Activated T-helper 1 cell treated with anti-CD3 and anti-CD28 coated beads, Interleukin-12 subunit alpha, Interleukin-12 subunit beta, Interleukin-2, Interleukin-4 antibody, amounts not matched to agents 30 ng/mL and 10 ng/mL and 1 ng/mL, durations not matched to agents 14 hours and 24 hours and 36 hours (primary cell): ENCODE measurements at regions of chr14 and their contacts with region 1.

Region 1: GRCh38 chr14:74762917-74763802 is at the start of gene YLPM1:
- DNase-seq: peak; percentile 92
- H3K4me3 Mint-ChIP-seq: peak within 1 kb of the TSS; percentile 98
- H3K27ac Mint-ChIP-seq: peak within 1 kb of the TSS; percentile 97
- H3K4me1 Mint-ChIP-seq: peaks cover 43% of the 10 kb centered on the region
- H3K27me3 Mint-ChIP-seq: peaks cover 1% of the 10 kb centered on the region
- total RNA-seq, gene YLPM1: 70.4 and 73.7 TPM in 2 replicates

Region 2: DNA sequence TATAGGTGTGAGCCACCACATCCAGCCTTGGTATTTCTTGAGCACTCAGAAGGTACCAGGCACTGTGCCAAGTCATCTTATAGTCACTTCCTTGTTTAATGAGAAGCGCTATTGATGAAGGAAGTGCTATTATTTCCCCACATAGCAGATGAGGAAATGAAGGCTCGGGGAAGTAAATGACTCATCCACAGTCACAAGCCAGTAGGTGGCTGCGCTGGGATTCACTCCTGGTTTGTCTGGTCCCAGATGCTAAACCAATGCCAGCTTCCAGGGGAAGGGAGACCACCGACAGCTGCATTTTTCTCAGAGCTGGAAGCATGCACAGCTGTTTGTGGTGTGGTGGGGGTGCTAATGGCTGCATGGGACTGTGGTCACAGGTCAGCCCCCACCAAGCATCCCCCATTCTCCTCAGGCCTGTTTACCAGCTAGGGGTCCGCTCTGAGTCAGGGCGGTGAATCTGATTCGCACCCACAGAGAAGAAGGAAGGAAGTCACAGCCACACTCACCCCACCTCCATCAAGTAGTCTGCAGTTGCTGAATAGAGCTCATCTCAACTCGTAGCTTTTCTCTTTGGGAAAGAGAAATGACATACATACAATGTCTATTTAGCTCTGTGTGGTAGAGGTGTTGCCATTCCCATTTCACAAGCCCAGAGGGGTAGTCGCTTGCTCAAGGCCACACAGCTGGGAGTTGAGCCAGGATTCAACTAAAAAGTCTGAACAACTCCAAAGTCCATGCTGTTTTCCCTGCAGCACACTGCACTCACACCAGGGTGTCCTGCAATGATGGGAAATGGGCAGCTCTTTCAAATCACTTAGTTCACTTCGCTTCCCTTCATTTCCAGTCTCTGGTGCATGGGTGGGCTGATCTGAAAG is 144.8 kb before region 1 on chr14:
- intact Hi-C with region 1: loop called (anchors 2 kb)
- DNase-seq: peak; percentile 57
- H3K4me3 Mint-ChIP-seq: peak overlapping the region; percentile 43
- H3K27ac Mint-ChIP-seq: peak overlapping the region; percentile 67
- H3K4me1 Mint-ChIP-seq: peaks cover 75% of the 10 kb centered on the region
- H3K27me3 Mint-ChIP-seq: peaks cover 30% of the 10 kb centered on the region

Region 3: GRCh38 chr14:74841230-74842207 is 78.4 kb after region 1 on chr14:
- intact Hi-C with region 1: loop called (anchors 1 kb)
- DNase-seq: peak; percentile 30
- H3K4me3 Mint-ChIP-seq: peak overlapping the region; percentile 72
- H3K27ac Mint-ChIP-seq: peak overlapping the region; percentile 92
- H3K4me1 Mint-ChIP-seq: peaks cover 60% of the 10 kb centered on the region
- H3K27me3 Mint-ChIP-seq: no peaks in the 10 kb centered on the region

Region 4: DNA sequence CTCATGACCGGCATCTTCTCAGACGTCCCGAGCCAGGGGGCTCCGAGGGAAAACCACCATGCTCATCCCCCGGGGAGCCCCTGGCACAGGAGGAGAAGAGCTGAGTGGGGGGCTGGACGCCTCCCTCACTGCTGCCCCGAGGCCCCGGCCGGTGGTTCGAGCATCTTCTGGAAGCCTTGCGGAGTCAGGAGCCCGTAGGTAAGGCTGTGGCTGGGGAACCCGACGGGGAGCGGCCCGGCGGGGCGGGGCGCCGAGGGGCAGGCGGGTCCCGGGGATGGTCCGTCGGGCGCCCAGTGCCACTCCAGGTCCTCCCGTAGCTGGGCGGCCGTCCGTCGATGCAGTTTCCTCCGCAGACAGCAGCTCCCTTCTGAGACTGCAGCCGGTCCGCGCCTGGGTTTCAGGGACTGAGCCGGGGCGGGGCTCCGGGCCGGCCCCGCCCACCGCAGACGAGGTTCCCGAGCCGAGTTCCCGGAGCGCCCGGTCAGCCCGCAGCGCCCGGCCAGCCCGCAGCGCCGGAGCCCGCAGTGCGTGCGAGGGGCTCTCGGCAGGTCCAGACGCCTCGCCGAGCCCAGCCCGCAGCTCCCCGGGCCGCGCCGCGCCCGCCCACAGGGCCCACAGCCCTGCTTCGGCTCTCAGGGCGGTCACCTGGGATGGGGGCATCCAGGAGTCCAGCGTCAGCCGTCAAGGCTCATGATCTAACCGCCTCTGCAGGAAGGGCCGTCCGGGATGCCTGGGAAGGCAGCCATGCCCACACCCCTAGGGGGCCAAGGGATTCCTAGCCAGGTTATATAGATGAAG is 192.3 kb after region 1 on chr14 and contains the start of gene PGF:
- intact Hi-C with region 1: no loop called
- DNase-seq: peak; percentile 10
- H3K4me3 Mint-ChIP-seq: peak within 1 kb of the TSS; percentile 57
- H3K27ac Mint-ChIP-seq: no peak within 1 kb of the TSS
- H3K4me1 Mint-ChIP-seq: no peaks in the 10 kb centered on the region
- H3K27me3 Mint-ChIP-seq: peaks cover 24% of the 10 kb centered on the region
- total RNA-seq, gene PGF: 0.22 and 0.41 TPM in 2 replicates

Region 5: DNA sequence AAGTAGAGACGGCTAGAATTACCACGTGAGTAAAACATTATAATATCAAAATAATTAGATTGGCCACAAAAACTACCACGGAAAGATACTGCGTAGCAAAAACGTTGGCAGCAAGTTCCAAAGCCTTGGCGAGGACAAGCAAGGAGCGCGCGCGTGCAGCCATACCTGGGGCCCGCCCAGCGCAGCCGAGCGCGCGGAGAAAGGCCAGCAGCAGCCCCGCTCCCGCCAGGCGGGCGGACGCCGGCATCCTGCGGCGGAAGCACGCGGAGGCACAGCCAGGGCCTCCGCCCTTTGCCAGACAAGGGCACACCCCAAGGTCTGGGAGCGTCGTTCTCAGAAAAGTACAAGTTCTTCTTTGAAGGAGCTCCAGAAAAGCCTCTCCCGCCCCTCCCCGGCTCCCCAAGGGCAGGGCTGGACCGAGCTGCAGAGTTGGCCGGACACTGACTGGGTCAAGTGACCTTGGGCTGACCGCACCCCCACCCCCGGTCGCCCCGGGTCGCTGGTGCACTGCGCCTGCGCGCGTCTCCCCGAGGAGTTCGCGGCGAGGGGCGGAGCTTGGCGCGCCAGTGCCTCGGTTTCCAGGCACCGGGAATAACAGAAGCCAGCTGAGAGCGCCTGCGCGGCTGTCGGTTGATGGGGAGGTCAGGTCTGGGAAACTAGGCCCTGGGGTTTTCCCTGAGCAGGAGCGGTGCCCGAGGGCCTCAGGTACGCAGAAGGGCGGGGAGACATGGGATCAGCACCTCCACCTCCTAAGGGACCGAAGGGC is 306.1 kb after region 1 on chr14 and contains the start of gene ZC2HC1C:
- intact Hi-C with region 1: loop called (anchors 5 kb)
- DNase-seq: peak; percentile 65
- H3K4me3 Mint-ChIP-seq: no peak within 1 kb of the TSS
- H3K27ac Mint-ChIP-seq: peak within 1 kb of the TSS; percentile 66
- H3K4me1 Mint-ChIP-seq: peaks cover 5% of the 10 kb centered on the region
- H3K27me3 Mint-ChIP-seq: no peaks in the 10 kb centered on the region
- total RNA-seq, gene ZC2HC1C: 0.71 and 0.80 TPM in 2 replicates

Region 6: DNA sequence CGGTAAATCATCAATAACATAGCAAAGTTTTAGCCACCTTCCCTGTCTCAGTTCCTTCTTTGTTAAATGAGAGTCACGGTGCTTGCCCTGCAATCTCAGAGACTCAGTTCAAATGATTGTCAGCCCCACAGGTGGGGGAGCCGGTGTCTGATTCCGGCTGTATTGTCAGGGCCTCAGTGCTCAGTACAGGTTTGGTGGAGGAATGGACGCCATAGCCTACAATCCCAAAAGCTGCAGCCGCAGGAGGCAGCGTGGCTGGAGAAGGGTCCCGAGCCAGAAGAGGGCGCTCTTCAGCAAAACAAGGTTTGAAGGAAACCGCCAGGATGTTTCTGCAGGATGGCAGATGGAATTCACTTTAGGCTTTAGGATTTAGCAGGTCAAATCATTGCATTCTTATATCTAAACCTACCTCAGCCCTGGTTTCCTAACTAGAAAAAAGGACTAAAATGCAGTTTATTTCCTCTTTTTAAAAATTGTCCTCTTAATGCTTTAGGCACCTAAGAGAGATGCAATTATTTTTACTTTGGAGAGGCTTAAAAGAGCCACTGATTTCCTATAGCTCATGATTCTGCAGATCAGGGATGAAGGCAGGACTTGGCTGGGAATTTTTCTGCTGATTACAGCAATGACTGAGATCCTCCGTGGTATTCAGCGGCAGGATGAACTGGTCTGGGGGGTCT is 544.7 kb after region 1 on chr14:
- intact Hi-C with region 1: loop called (anchors 10 kb)
- DNase-seq: peak; percentile 54
- H3K4me3 Mint-ChIP-seq: no peak overlapping the region
- H3K27ac Mint-ChIP-seq: no peak overlapping the region
- H3K4me1 Mint-ChIP-seq: peaks cover 18% of the 10 kb centered on the region
- H3K27me3 Mint-ChIP-seq: peaks cover 4% of the 10 kb centered on the region